ENCODE measurements at regions of chr13 and their contacts with region 1.

Region 1: DNA sequence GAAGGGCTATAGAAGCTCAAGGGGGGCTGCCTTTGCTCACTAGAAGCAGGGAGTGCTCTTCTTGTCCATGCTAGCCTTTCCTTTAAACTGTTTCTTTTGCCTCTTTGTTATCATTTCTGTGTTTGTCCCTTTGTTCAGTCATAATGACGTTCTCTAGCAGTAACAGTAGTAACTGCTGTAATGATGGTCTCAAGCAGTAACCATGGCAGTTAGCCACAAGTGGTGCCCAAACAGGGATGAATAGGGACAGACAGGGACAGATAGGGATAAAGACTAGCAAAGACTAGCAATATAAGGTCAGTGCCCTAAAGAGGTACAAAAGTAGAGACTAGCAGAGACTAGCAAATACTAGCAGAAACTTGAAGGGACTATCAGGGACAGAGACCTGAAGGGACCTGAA is 869.0 kb upstream of the PRR20A start:
- DNase-seq: no peak
- ATAC-seq: no peak
- H3K4me3 ChIP-seq: no peak overlapping the region
- H3K4me3 Mint-ChIP-seq: no peak overlapping the region
- H3K27ac ChIP-seq: no peak overlapping the region
- H3K27ac Mint-ChIP-seq: no peak overlapping the region
- H3K4me1 ChIP-seq: no peaks in the 10 kb centered on the region
- H3K4me1 Mint-ChIP-seq: peaks cover 0 to 2% (median 0%) of the 10 kb centered on the region in 7 donors
- H3K27me3 ChIP-seq: no peaks in the 10 kb centered on the region
- H3K27me3 Mint-ChIP-seq: no peaks in the 10 kb centered on the region

Region 2: DNA sequence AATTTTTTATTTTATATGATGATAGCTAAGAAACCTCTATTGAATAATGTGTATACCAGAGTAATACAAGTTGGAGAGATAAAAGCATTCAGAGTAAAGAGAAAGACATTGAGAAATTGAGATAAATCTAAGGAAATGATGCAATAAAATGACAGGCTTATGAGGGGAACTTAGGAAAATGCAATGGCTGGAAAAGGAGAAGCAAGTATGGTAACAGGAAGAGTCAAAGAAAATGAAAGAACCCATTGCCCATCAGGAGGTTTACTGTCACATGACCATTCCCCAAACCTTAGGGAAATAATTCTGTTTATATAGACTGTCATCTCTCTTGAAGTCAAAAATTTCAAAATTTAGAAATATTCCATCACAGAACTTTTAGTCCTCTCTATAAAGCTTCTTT is 61.0 kb after region 1 on chr13:
- CTCF ChIA-PET with region 1: no interaction called
- POLR2A ChIA-PET with region 1: no interaction called
- intact Hi-C with region 1: loop called in 1 of 2 experiments (anchors 2 kb)
- DNase-seq: no peak
- ATAC-seq: no peak
- H3K4me3 ChIP-seq: no peak overlapping the region
- H3K4me3 Mint-ChIP-seq: no peak overlapping the region
- H3K27ac ChIP-seq: no peak overlapping the region
- H3K27ac Mint-ChIP-seq: no peak overlapping the region
- H3K4me1 ChIP-seq: no peaks in the 10 kb centered on the region
- H3K4me1 Mint-ChIP-seq: no peaks in the 10 kb centered on the region
- H3K27me3 ChIP-seq: no peaks in the 10 kb centered on the region
- H3K27me3 Mint-ChIP-seq: no peaks in the 10 kb centered on the region